Endothelial cell of umbilical vein (primary cell): ENCODE measurements at regions of chr19 and their contacts with region 1.

Region 1: GRCh38 chr19:9205501-9206113 is 13.8 kb downstream of the OR7D4 start:
- DNase-seq: peak; percentile 58
- H3K4me3 ChIP-seq: no peak overlapping the region
- H3K27ac ChIP-seq: no peak overlapping the region
- H3K4me1 ChIP-seq: no peaks in the 10 kb centered on the region
- H3K27me3 ChIP-seq: no peaks in the 10 kb centered on the region
- CTCF ChIP-seq: peak; percentile 74 to 87
- POLR2A ChIP-seq: no peak

Region 2: DNA sequence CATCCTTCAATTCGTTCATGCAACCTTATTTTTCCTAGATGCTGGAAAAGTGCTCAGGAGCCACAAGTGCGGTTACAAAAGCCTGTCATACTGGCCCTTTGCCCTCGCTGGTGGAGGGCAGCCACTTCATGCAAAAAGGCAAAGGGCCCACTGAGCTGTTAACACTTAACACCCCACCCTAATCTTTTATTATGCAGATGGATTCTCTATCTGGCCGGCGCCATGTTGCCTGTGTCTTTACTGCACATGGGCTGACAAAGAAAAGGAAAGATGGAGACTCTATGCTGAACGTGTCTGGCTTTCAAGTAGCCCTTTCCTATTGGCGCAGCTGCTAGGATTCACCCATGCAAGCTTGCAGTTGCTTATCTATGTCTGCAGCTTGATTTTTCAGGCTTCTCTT is 16.1 kb before region 1 on chr19:
- CTCF ChIA-PET with region 1: interaction called, 12 read pairs
- POLR2A ChIA-PET with region 1: no interaction called
- dilution Hi-C with region 1: no loop called
- intact Hi-C with region 1: no loop called
- DNase-seq: no peak
- H3K4me3 ChIP-seq: no peak overlapping the region
- H3K27ac ChIP-seq: no peak overlapping the region
- H3K4me1 ChIP-seq: no peaks in the 10 kb centered on the region
- H3K27me3 ChIP-seq: no peaks in the 10 kb centered on the region
- CTCF ChIP-seq: no peak
- POLR2A ChIP-seq: no peak